Lower leg skin (tissue), 4 donors: ENCODE measurements at regions of chr15 and their contacts with region 1.

Region 1: GRCh38 chr15:35393403-35393802 is 152.6 kb downstream of the DPH6 start:
- DNase-seq: no peak
- H3K4me3 ChIP-seq: no peak overlapping the region
- CTCF ChIP-seq: no peak
- POLR2A ChIP-seq: no peak

Region 2: DNA sequence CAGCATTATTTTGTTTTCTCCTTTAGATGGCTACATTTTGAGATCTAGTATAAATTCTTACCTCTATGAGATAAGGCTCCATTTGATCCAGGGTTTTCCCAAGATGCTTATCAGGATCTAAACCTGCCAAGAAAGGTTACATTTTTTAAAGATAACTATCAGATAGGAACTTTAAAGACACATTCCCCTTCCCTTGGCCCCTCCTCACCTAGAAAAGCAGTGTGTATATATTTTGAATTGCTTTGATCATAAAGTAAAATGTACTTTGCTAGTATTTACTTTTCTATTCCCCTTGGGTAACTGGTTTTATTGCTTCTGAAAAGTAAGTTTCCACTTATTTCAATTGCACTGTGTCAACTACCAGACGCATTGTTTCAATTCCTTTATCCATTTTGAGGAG is 17.4 kb after region 1 on chr15:
- intact Hi-C with region 1: loop called (anchors 1 kb)
- DNase-seq: no peak
- H3K4me3 ChIP-seq: no peak overlapping the region
- CTCF ChIP-seq: no peak
- POLR2A ChIP-seq: no peak

Region 3: GRCh38 chr15:35674873-35675781 is 281.7 kb after region 1 on chr15:
- intact Hi-C with region 1: no loop called
- DNase-seq: no peak
- H3K4me3 ChIP-seq: no peak overlapping the region
- CTCF ChIP-seq: no peak
- POLR2A ChIP-seq: no peak